ENCODE measurements at regions of chr15 and their contacts with region 1.

Region 1: GRCh38 chr15:46880791-46881190 is 836.5 kb upstream of the SEMA6D start:
- DNase-seq: no peak
- ATAC-seq: no peak
- H3K4me3 ChIP-seq: no peak overlapping the region
- H3K27ac ChIP-seq: no peak overlapping the region
- H3K4me1 ChIP-seq: no peaks in the 10 kb centered on the region
- H3K27me3 ChIP-seq: no peaks in the 10 kb centered on the region

Region 2: DNA sequence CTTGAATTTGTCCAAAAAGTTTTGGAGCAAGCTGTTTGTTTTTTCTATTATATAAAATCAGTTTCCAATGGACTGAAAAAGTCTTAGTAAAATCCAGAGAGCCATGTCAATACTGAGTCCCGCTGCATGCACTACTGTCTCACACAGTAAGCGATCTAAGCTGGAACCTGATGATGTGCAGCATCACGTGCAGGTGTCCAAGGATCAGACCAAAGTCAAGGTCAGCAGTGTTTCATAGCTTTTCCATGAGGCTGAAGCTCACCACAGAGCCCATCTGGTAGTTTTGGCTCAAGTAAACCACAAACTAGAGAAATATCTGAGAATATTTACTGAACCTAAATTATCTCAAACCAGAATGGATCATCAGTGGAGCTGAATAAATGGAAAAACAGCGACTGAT is 52.5 kb after region 1 on chr15:
- intact Hi-C with region 1: no loop called
- DNase-seq: no peak
- ATAC-seq: no peak
- H3K4me3 ChIP-seq: no peak overlapping the region
- H3K27ac ChIP-seq: no peak overlapping the region
- H3K4me1 ChIP-seq: no peaks in the 10 kb centered on the region
- H3K27me3 ChIP-seq: no peaks in the 10 kb centered on the region

Region 3: DNA sequence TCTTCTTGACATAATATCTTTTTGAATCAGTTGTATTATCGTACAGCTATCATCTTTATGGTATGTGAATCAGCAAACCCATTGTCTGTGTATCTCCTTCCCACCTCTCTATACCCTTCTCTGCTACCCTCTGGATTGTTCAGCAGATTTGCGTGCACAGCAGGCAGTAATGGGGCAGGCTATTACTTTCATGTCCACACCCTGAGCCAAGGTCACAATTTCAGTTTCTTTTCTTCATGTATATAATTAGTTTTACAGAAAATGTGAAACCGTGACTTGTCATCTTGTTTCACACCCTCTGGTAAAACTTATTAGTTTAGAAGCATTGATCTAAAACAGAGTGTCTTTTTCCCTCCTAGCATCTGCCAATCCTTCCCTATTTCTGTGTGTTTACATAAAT is 66.2 kb after region 1 on chr15:
- intact Hi-C with region 1: loop called in 1 of 4 experiments (anchors 10 kb)
- DNase-seq: no peak
- ATAC-seq: no peak
- H3K4me3 ChIP-seq: no peak overlapping the region
- H3K27ac ChIP-seq: no peak overlapping the region
- H3K4me1 ChIP-seq: no peaks in the 10 kb centered on the region
- H3K27me3 ChIP-seq: no peaks in the 10 kb centered on the region